ENCODE measurements at regions of chrX and their contacts with region 1.

Region 1: DNA sequence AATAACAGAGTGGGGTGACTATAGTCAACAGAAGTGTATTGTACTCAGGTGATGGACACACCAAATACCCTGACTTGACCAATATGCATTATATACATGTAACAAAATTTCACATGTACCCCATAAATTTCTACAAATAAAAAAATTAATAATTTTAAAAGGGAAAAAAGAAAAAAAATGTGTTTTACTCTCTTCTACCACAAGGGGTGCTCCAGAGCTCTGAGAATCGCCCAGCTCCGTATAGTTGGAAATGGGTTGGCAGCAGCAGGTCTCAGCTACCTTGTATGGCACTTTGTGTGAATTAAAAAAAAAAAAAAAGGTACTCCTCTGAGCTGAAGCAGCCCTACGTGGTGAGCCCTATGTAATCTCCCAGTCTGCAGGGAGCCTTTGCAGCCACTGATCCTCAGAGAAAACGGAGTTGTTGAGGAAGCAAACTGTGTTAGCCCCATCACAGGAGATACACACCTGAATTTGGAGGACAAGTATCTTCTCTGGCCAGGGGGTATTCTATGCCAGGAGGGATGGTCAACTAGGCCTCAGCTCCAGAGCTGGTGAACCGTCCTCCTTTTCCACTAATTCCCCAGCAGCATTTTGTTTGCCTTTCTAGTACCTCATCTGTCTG is 17.2 kb upstream of the POLA1 start:
- DNase-seq: no peak
- H3K4me3 ChIP-seq: no peak overlapping the region
- H3K27ac ChIP-seq: no peak overlapping the region
- H3K27me3 ChIP-seq: no peaks in the 10 kb centered on the region
- CTCF ChIP-seq: peak; percentile 54

Region 2: GRCh38 chrX:25029288-25029825 is 352.8 kb after region 1 on chrX:
- CTCF ChIA-PET with region 1: interaction called, 17 read pairs
- POLR2A ChIA-PET with region 1: no interaction called
- DNase-seq: no peak
- H3K4me3 ChIP-seq: no peak overlapping the region
- H3K27ac ChIP-seq: no peak overlapping the region
- H3K27me3 ChIP-seq: peaks cover 14% of the 10 kb centered on the region
- CTCF ChIP-seq: no peak

Measured in AG04450 (cell line).